Astrocyte of the cerebellum (primary cell): ENCODE measurements at regions of chr7 and their contacts with region 1.

Region 1: GRCh38 chr7:2729701-2730417 is 41.9 kb downstream of the AMZ1 start:
- DNase-seq: peak; percentile 19
- H3K4me3 ChIP-seq: no peak overlapping the region
- CTCF ChIP-seq: no peak

Region 2: GRCh38 chr7:2670720-2671391 is 59.0 kb before region 1 on chr7:
- in situ Hi-C with region 1: no loop called
- DNase-seq: peak; percentile 9
- H3K4me3 ChIP-seq: no peak overlapping the region
- CTCF ChIP-seq: peak; percentile 83

Region 3: DNA sequence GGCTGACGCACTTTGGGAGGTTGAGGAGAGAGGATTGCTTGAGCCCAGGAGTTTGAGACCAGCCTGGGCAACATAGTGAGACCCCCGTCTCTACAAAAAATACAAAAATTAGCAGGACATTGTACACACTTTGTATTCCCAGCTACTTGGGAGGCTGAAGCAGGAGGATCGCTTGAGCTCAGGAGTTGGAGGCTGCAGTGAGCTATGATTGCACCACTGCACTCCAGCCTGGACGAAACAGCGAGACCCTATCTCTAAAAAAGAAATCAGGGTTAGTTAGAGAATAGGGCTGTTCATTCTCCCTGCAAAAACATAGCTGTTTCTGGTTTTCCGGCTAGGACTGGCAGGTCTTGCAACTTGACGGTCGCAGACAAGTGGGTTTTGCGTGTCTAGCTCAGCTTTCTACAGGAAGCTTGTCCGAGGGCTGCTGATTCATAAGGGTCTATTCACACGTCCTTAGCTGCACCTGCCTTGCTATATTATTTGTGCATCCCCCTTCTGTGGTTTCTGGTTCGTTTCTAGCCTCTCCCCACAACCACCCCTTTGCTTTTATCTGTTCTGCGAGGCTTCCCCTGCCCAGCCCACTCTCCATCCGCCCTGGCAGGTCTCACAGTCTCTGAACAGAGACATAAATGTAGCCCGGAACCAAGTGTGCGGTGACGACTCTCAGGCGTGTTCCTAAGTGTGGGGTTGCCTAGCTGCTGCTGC is 31.1 kb before region 1 on chr7:
- in situ Hi-C with region 1: no loop called
- DNase-seq: no peak
- H3K4me3 ChIP-seq: no peak overlapping the region
- CTCF ChIP-seq: no peak

Region 4: DNA sequence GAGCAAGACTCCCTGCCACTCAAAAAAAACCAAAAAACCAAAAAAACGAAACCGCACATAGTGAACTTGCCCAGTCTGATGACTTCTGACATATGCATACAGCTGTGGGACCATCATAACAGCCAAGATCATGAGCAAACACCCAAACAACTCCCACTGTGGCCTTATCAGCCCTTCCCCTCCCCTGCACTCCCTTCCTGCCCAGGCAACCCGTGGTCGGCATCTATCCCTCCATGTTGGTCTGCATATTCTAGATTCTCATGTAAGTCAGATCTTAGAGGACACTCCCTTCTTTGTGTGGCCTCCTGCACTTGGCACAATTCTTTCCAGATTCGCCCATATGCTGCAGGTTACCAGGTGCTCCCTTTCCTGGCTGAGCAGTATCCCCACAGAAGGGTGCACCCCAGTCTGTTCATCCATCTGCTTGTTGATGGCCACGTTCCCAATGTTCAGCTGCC is 41.4 kb after region 1 on chr7:
- in situ Hi-C with region 1: no loop called
- DNase-seq: no peak
- H3K4me3 ChIP-seq: no peak overlapping the region
- CTCF ChIP-seq: no peak

Region 5: GRCh38 chr7:2807845-2808772 is 78.2 kb after region 1 on chr7:
- in situ Hi-C with region 1: loop called (anchors 5 kb)
- DNase-seq: no peak
- H3K4me3 ChIP-seq: no peak overlapping the region
- CTCF ChIP-seq: no peak